Psoas muscle (tissue), 8 donors: ENCODE measurements at regions of chr16 and their contacts with region 1.

Region 1: DNA sequence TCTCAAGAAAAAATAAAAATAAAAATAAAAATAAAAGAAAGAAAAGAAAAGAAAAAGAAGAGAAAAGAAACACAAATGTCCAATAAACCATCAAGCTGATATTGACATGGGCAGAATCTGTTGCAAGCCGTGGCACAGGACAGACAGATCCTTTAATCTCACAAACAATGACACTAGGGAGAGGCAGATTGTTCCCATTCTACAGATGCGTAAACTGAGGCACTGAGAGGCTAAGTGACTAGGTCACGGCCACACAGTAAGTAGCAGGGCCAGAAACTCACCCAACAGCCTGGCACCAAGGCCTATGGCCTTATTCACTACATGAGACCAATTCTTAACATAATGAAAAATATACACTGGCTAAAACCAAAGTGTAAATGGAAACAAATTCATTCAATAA is 28.3 kb upstream of the ZFP90 start:
- DNase-seq: no peak
- ATAC-seq: no peak
- H3K4me3 ChIP-seq: no peak overlapping the region
- H3K27ac ChIP-seq: no peak overlapping the region
- H3K4me1 ChIP-seq: no peaks in the 10 kb centered on the region
- H3K27me3 ChIP-seq: peaks cover 0 to 28% (median 2%) of the 10 kb centered on the region in 3 donors
- CTCF ChIP-seq: no peak

Region 2: GRCh38 chr16:68396481-68396880 is 114.3 kb before region 1 on chr16:
- intact Hi-C with region 1: loop called in 1 of 2 experiments (anchors 2 kb)
- DNase-seq: no peak
- ATAC-seq: no peak
- H3K4me3 ChIP-seq: no peak overlapping the region
- H3K27ac ChIP-seq: no peak overlapping the region
- H3K4me1 ChIP-seq: no peaks in the 10 kb centered on the region
- H3K27me3 ChIP-seq: no peaks in the 10 kb centered on the region
- CTCF ChIP-seq: peak; percentile 37

Region 3: GRCh38 chr16:68719993-68720489 is 209.3 kb after region 1 on chr16:
- intact Hi-C with region 1: no loop called
- DNase-seq: no peak
- ATAC-seq: no peak
- H3K4me3 ChIP-seq: no peak overlapping the region
- H3K27ac ChIP-seq: no peak overlapping the region
- H3K4me1 ChIP-seq: no peaks in the 10 kb centered on the region
- H3K27me3 ChIP-seq: no peaks in the 10 kb centered on the region
- CTCF ChIP-seq: no peak